GM10248 (cell line): ENCODE measurements at regions of chr12 and their contacts with region 1.

Region 1: GRCh38 chr12:52082988-52083637 is 3.6 kb downstream of the SMIM41 start:
- DNase-seq: peak; percentile 87
- CTCF ChIP-seq: peak; percentile 94

Region 2: GRCh38 chr12:51994959-51995358 is 88.2 kb before region 1 on chr12:
- CTCF ChIA-PET with region 1: interaction called, 15 read pairs
- POLR2A ChIA-PET with region 1: no interaction called
- DNase-seq: no peak
- CTCF ChIP-seq: no peak

Region 3: GRCh38 chr12:52093346-52093745 is 10.2 kb after region 1 on chr12:
- CTCF ChIA-PET with region 1: interaction called, 14 read pairs
- POLR2A ChIA-PET with region 1: no interaction called
- DNase-seq: no peak
- CTCF ChIP-seq: no peak

Region 4: GRCh38 chr12:52121824-52122539 is 38.9 kb after region 1 on chr12:
- CTCF ChIA-PET with region 1: interaction called, 19 read pairs
- POLR2A ChIA-PET with region 1: no interaction called
- DNase-seq: peak; percentile 81
- CTCF ChIP-seq: peak; percentile 81